ENCODE measurements at regions of chr20 and their contacts with region 1.

Region 1: GRCh38 chr20:44388466-44389023 is 33.0 kb downstream of the HNF4A start:
- DNase-seq: no peak
- H3K4me3 ChIP-seq: no peak overlapping the region
- H3K27me3 ChIP-seq: peaks cover 5% of the 10 kb centered on the region
- CTCF ChIP-seq: peak; percentile 87

Region 2: GRCh38 chr20:44217342-44218092 is 171.0 kb before region 1 on chr20:
- CTCF ChIA-PET with region 1: interaction called, 36 read pairs
- POLR2A ChIA-PET with region 1: no interaction called
- DNase-seq: no peak
- H3K4me3 ChIP-seq: no peak overlapping the region
- H3K27me3 ChIP-seq: no peaks in the 10 kb centered on the region
- CTCF ChIP-seq: peak; percentile 96

Region 3: GRCh38 chr20:44407402-44408184 is 19.0 kb after region 1 on chr20:
- CTCF ChIA-PET with region 1: interaction called, 16 read pairs
- POLR2A ChIA-PET with region 1: no interaction called
- DNase-seq: peak; percentile 17
- H3K4me3 ChIP-seq: no peak overlapping the region
- H3K27me3 ChIP-seq: peaks cover 2% of the 10 kb centered on the region
- CTCF ChIP-seq: no peak

Region 4: DNA sequence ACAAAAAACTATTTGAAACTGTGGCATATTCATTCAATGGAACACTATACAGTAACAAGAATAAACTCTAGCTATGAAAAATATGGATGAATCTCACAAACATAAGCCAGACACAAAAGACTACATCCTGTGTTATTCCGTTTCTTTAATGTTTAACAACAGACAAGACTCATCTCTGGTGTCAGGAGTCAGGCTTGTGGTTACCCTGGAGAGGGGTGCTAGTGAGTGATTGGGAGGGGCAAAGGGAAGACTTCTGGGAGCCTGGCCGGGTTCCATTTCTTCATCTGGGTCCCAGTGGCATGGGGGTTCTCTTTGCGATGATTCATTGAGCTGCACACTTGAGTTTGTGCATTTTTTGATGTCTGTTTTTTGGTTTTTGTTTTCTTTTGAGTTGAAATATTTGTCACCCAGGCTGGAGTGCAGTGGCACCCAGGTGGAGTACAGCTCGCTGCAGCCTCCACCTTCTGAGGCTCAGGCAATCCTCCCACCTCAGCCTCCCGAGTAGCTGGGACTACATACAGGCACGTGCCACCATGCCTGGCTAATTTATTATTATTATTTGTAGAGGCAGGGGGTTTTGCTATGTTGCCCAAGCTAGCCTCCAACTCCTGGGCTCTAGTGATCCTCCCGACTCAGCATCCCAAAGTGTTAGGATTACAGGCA is 65.9 kb after region 1 on chr20:
- CTCF ChIA-PET with region 1: interaction called, 16 read pairs
- POLR2A ChIA-PET with region 1: no interaction called
- DNase-seq: no peak
- H3K4me3 ChIP-seq: no peak overlapping the region
- H3K27me3 ChIP-seq: 0 out of 2 replicates have a peak, but pooled peaks cover 2% of the 10 kb centered on the region
- CTCF ChIP-seq: no peak

Region 5: DNA sequence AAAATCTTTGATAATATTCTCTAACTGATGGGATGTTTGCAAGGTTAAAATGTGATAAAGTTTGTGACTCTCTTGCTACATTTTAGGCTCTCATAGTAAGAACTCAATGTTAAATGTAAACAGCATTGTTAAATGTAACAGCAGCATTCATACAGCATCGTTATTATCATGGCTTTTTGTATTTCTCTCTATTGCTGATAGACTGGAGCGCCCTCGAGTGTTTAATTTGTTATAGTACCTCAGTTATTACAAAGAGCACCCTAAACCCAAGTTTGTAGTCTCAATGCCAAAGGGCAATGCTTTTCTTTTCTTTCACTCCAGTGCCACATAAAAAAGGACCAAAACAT is 72.2 kb after region 1 on chr20:
- CTCF ChIA-PET with region 1: interaction called, 16 read pairs
- POLR2A ChIA-PET with region 1: no interaction called
- DNase-seq: no peak
- H3K4me3 ChIP-seq: no peak overlapping the region
- H3K27me3 ChIP-seq: peaks cover under 1% of the 10 kb centered on the region
- CTCF ChIP-seq: peak; percentile 42

Region 6: DNA sequence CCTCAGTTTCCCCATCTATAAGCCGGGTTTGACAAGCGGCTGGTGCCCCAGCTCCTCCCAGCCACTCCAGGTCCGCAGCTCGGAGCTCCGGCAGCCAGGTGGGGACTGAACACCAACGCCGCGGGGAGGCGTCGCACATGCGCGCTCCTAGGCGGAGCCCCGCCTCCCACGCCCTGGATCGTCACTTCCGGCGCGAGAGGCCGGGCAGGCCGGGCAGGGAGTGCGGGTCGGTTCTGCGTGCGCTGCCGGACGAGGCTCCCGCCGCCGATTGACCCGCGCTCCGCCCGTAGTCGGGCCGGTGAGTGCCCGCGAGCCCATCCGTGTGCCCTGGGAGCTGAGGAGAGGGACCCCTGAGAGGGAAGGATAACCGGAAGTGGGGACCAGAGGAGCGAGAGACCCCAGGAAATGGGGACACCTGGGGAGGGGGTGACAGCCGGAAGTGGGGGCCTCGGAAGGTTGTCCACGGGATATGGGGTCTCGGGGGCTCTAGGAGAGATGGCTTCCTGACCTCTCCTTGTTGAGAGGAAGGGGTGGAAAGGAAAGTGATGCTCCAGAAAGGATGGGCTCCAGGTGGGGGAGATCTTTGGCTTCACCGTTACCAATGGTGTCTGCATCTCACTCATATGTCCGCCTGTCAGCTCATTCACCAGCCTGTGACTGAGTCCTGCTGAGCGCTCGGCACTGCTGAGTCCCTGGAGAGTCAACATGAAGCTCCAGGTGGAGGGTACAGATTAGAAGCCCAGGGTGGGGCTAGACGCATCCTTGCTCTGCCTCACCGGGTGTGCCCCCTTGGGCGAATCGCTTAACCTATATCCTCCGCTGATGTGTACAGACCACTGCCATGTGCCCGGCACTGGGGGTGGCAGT is 87.4 kb after region 1 on chr20 and contains the start of gene TTPAL:
- CTCF ChIA-PET with region 1: interaction called, 68 read pairs
- POLR2A ChIA-PET with region 1: no interaction called
- DNase-seq: peak; percentile 19
- H3K4me3 ChIP-seq: peak within 1 kb of the TSS; percentile 68
- H3K27me3 ChIP-seq: no peaks in the 10 kb centered on the region
- CTCF ChIP-seq: peak; percentile 54
- polyA plus RNA-seq, gene TTPAL: 9.4 and 13.8 TPM in 2 replicates